Calu3 (cell line): ENCODE measurements at regions of chr16 and their contacts with region 1.

Region 1: DNA sequence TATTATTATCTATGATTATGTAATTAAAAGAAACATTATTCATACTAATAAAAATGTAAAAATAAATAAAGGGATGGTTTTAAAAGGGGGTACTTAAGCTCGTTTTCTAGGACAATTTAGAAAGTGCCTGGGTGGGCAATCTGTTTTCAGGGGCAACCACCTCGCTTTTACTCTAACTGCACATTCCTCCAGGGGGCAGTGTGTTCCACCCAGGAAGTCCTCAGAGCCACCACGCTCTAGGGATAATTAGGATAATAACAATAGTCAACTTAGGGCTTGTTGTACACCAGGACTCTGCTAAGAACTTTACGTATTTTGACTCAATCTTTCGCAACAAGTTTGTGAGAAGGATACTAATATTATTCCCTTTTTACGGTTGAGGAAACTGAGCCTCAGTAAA is 396.7 kb upstream of the MAF start:
- DNase-seq: peak; percentile 20
- H3K4me3 Mint-ChIP-seq: no peak overlapping the region
- H3K27ac Mint-ChIP-seq: no peak overlapping the region
- H3K4me1 Mint-ChIP-seq: no peaks in the 10 kb centered on the region
- H3K27me3 Mint-ChIP-seq: no peaks in the 10 kb centered on the region
- CTCF ChIP-seq: peak; percentile 43

Region 2: DNA sequence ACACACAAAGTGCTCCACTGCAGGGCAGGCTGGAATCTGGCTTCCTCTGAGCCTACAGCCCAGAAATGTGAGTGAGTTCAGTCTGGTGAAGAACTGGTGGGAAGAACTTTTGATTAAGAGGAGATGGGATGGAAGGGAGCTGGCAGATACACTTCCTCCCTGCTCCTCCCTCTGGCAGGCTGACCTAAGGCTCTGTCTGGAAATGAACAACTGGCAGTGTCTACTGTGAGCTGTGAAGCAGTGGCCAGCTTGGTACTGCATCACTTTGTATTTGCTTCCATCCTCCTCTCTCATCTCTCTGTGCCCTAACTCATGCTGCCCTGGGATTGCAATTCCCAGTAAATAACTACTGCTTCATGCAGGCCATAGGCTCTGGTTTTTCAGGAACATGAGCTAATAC is 442.3 kb before region 1 on chr16:
- CTCF ChIA-PET with region 1: no interaction called
- intact Hi-C with region 1: no loop called
- DNase-seq: no peak
- H3K4me3 Mint-ChIP-seq: no peak overlapping the region
- H3K27ac Mint-ChIP-seq: no peak overlapping the region
- H3K4me1 Mint-ChIP-seq: no peaks in the 10 kb centered on the region
- H3K27me3 Mint-ChIP-seq: peaks cover 93% of the 10 kb centered on the region
- CTCF ChIP-seq: no peak

Region 3: GRCh38 chr16:80466024-80466987 is 469.0 kb after region 1 on chr16:
- CTCF ChIA-PET with region 1: no interaction called
- intact Hi-C with region 1: loop called (anchors 10 kb)
- DNase-seq: peak; percentile 73
- H3K4me3 Mint-ChIP-seq: no peak overlapping the region
- H3K27ac Mint-ChIP-seq: no peak overlapping the region
- H3K4me1 Mint-ChIP-seq: peaks cover 18% of the 10 kb centered on the region
- H3K27me3 Mint-ChIP-seq: no peaks in the 10 kb centered on the region
- CTCF ChIP-seq: peak; percentile 92